ENCODE measurements at regions of chr16 and their contacts with region 1.

Region 1: GRCh38 chr16:53435066-53435688 is 906 bp downstream of the RBL2 start:
- DNase-seq: peak; percentile 65
- ATAC-seq: peak; percentile 94

Region 2: GRCh38 chr16:53282975-53283946 is 151.9 kb before region 1 on chr16:
- intact Hi-C with region 1: loop called in 1 of 2 experiments (anchors 5 kb)
- DNase-seq: no peak
- ATAC-seq: peak in 1 of 2 donors; percentile 25

Region 3: DNA sequence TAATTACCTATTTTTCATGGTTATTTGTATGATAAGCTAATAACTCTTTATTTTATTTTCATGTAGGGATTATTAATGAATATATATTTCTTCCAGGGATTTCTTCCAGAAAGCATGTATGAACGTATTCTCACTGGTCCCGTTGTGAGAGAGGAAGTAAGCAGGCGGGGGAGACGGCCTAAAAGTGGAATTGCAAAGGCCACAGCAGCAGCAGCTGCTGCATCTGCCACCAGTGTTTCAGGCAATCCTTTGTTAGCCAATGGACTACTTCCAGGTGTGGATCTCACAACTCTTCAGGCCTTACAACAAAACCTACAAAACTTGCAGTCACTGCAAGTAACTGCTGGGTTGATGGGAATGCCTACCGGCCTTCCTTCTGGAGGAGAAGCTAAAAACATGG is 111.3 kb before region 1 on chr16:
- intact Hi-C with region 1: loop called in 1 of 2 experiments (anchors 10 kb)
- DNase-seq: no peak
- ATAC-seq: no peak